ENCODE measurements at regions of chr3 and their contacts with region 1.

Region 1: GRCh38 chr3:152508705-152509104 is 240.0 kb downstream of the MBNL1 start:
- DNase-seq: no peak
- ATAC-seq: peak; percentile 29; the same call in 2 of the 3 replicates
- H3K4me3 ChIP-seq: no peak overlapping the region
- H3K27ac ChIP-seq: no peak overlapping the region; the same call in 1 of the 2 replicates
- H3K4me1 ChIP-seq: peaks cover 26% of the 10 kb centered on the region
- H3K27me3 ChIP-seq: no peaks in the 10 kb centered on the region
- CTCF ChIP-seq: peak; percentile 31 to 36 (median 35); a peak in 4 of 6 replicates
- EP300 ChIP-seq: no peak
- POLR2A ChIP-seq: no peak
- RAD21 ChIP-seq: peak; percentile 69

Region 2: GRCh38 chr3:152491922-152492321 is 16.8 kb before region 1 on chr3:
- CTCF ChIA-PET with region 1: interaction called, 379 read pairs
- POLR2A ChIA-PET with region 1: interaction called, 4 read pairs
- RAD21 ChIA-PET with region 1: interaction called, 8 read pairs
- SMC1A ChIA-PET with region 1: interaction called, 28 read pairs
- in situ Hi-C with region 1: no loop called
- intact Hi-C with region 1: loop called (anchors 2 kb)
- DNase-seq: no peak
- ATAC-seq: peak; percentile 93
- H3K4me3 ChIP-seq: no peak overlapping the region
- H3K27ac ChIP-seq: no peak overlapping the region
- H3K4me1 ChIP-seq: peaks cover 5% of the 10 kb centered on the region; the same call in 1 of the 2 replicates
- H3K27me3 ChIP-seq: no peaks in the 10 kb centered on the region
- CTCF ChIP-seq: no peak
- EP300 ChIP-seq: peak; percentile 69 to 83
- POLR2A ChIP-seq: no peak
- RAD21 ChIP-seq: no peak

Region 3: GRCh38 chr3:152519376-152519775 is 10.7 kb after region 1 on chr3:
- CTCF ChIA-PET with region 1: interaction called, 246 read pairs
- POLR2A ChIA-PET with region 1: interaction called, 3 read pairs
- RAD21 ChIA-PET with region 1: interaction called, 81 read pairs
- SMC1A ChIA-PET with region 1: interaction called, 248 read pairs
- in situ Hi-C with region 1: no loop called
- intact Hi-C with region 1: loop called (anchors 1 kb)
- DNase-seq: no peak
- ATAC-seq: peak; percentile 72
- H3K4me3 ChIP-seq: no peak overlapping the region
- H3K27ac ChIP-seq: no peak overlapping the region
- H3K4me1 ChIP-seq: peaks cover 5% of the 10 kb centered on the region
- H3K27me3 ChIP-seq: no peaks in the 10 kb centered on the region
- CTCF ChIP-seq: no peak
- EP300 ChIP-seq: no peak; a peak in 1 of 4 replicates
- POLR2A ChIP-seq: no peak
- RAD21 ChIP-seq: no peak

Region 4: DNA sequence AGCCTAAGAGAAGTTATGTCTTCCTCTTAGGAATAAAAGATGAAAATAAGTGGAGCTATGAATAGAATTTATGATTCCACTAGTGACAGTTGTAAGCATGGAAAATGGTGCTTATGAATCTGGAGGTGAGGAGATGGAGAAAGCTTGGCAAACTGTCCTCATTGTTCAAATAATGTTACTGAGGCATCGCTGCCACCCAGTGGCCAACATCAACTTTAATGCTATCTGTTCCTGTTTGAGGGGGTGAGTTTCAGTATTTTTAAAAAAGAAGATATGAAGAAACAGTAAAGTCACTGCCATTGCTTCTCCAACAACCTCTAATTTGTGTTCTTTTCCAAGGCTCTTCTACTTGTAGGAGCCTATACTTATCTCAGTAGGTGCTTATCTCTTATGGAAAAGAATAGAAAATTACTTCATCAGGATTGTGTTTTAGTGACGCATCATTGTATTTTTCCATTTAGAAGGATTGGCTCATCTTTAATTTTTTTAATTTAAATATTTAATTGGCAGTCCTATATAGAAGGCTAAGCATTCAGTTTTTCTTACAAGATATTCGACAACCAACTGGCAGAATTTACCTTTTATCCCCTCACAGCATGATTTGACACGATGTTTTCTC is 65.9 kb after region 1 on chr3:
- CTCF ChIA-PET with region 1: interaction called, 45 read pairs
- POLR2A ChIA-PET with region 1: no interaction called
- RAD21 ChIA-PET with region 1: interaction called, 16 read pairs
- SMC1A ChIA-PET with region 1: interaction called, 55 read pairs
- in situ Hi-C with region 1: no loop called
- intact Hi-C with region 1: no loop called
- DNase-seq: peak; percentile 26
- ATAC-seq: peak; percentile 95
- H3K4me3 ChIP-seq: no peak overlapping the region
- H3K27ac ChIP-seq: no peak overlapping the region
- H3K4me1 ChIP-seq: no peaks in the 10 kb centered on the region; the same call in 1 of the 2 replicates
- H3K27me3 ChIP-seq: no peaks in the 10 kb centered on the region
- CTCF ChIP-seq: peak; percentile 38 to 69 (median 52); a peak in 5 of 6 replicates
- EP300 ChIP-seq: no peak
- POLR2A ChIP-seq: no peak
- RAD21 ChIP-seq: peak; percentile 87